ENCODE measurements at regions of chr11 and their contacts with region 1.

Region 1: GRCh38 chr11:30586251-30587144 is at the start of gene MPPED2:
- DNase-seq: peak; percentile 57 to 61
- ATAC-seq: peak; percentile 71 to 93 (median 84)
- H3K4me3 ChIP-seq: peak within 1 kb of the TSS; percentile 72 to 96 (median 90)
- H3K27ac ChIP-seq: peak within 1 kb of the TSS; percentile 47 to 95 (median 92)
- H3K4me1 ChIP-seq: peaks cover 0 to 20% (median 9%) of the 10 kb centered on the region in 9 donors
- H3K27me3 ChIP-seq: peaks cover 0 to 51% (median 0%) of the 10 kb centered on the region in 7 donors
- CTCF ChIP-seq: peak; percentile 16 to 64 (median 53)
- total RNA-seq, gene MPPED2: 6.5 to 15.1 (median 10.6) TPM

Region 2: GRCh38 chr11:30358536-30358935 is 228.0 kb before region 1 on chr11:
- intact Hi-C with region 1: loop called in 3 of 10 experiments (anchors 5 to 10 kb)
- DNase-seq: peak in 1 of 2 donors; percentile 39
- ATAC-seq: peak in 5 of 8 donors; percentile 33 to 75 (median 62)
- H3K4me3 ChIP-seq: no peak overlapping the region
- H3K27ac ChIP-seq: peak overlapping the region in 2 of 10 donors; percentile 33 to 46
- H3K4me1 ChIP-seq: peaks cover 0 to 16% (median 0%) of the 10 kb centered on the region in 9 donors
- H3K27me3 ChIP-seq: no peaks in the 10 kb centered on the region
- CTCF ChIP-seq: no peak

Region 3: DNA sequence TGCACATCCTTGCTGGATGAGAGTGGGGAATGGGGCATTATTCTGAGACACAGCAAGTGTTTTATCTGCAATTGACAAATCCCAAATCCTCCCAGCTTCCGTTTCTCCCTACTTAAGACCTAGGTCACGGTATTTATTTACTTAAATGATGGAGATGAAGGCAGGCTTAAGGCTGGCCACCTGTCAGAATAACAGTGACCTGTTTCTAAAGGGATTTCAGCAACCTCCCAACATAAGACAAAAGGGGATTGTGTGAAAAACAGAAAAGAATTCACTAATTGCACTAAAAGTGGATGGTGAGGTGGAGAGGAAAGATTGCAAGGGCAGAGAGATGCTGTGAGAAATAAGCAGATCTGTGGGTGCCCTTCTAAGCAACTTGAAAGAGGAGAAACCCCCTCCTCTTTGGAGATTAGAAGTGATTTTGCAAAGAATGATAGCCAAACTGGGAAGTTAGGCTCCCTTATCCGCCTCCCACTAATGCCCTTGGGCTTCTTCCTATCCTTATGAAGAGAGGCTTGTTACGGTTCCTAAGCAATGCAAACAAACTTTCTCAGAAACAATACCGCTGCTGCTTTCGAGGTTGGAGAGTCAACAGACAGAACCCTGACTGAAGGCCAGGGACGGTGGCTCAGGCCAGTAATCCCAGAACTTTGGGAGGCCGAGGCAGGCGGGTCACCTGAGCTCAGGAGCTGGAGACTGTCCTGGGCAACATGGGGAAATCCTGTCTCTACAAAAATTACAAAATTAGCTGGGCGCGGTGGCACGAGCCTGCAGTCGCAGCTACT is 179.3 kb before region 1 on chr11:
- intact Hi-C with region 1: loop called in 1 of 10 experiments (anchors 10 kb)
- DNase-seq: peak in 1 of 2 donors; percentile 22
- ATAC-seq: peak; percentile 52 to 97 (median 81)
- H3K4me3 ChIP-seq: no peak overlapping the region
- H3K27ac ChIP-seq: peak overlapping the region in 1 of 10 donors; percentile 18
- H3K4me1 ChIP-seq: no peaks in the 10 kb centered on the region
- H3K27me3 ChIP-seq: no peaks in the 10 kb centered on the region
- CTCF ChIP-seq: no peak

Region 4: GRCh38 chr11:30459821-30460220 is 126.7 kb before region 1 on chr11:
- intact Hi-C with region 1: loop called in 2 of 10 experiments (anchors 10 kb)
- DNase-seq: no peak
- ATAC-seq: peak in 1 of 8 donors; percentile 71
- H3K4me3 ChIP-seq: no peak overlapping the region
- H3K27ac ChIP-seq: no peak overlapping the region
- H3K4me1 ChIP-seq: peaks cover 11 to 69% (median 34%) of the 10 kb centered on the region in 9 donors
- H3K27me3 ChIP-seq: no peaks in the 10 kb centered on the region
- CTCF ChIP-seq: no peak

Region 5: DNA sequence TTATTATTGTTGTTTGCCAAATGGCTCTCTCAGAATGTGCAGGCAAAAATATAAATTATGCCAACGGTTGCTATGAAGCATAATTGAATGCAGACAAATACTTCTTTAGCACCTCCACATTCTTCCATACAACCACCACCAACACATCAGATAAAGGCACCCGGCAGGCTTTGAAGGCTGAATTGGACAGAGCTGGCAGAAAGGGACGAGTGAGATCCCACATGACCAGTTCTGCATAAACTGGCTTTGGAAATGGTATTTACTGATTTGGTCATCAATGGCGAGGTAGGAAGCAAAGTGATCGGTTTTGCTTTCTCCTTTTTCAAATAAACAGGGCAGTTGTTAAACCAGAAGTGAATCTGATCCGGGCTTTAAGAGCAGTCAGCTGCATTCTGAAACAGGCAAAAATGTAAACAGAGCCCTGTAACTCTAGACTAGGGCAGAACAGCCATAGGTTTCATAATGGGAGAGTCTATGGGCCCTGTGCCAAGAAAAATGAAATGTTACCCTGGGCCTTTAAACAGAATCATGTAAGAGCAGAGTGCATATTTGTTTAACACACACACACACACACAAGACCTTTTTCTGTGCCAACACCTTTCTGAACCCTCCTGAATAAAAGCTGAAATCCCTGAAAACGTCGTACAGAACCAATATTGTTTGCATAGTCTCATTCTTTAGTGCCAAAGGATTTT is 98.0 kb before region 1 on chr11:
- intact Hi-C with region 1: loop called in 6 of 10 experiments (anchors 5 to 10 kb)
- DNase-seq: no peak
- ATAC-seq: peak in 5 of 8 donors; percentile 41 to 55 (median 52)
- H3K4me3 ChIP-seq: no peak overlapping the region
- H3K27ac ChIP-seq: peak overlapping the region in 4 of 10 donors; percentile 14 to 48 (median 43)
- H3K4me1 ChIP-seq: peaks cover 3 to 54% (median 38%) of the 10 kb centered on the region in 9 donors
- H3K27me3 ChIP-seq: no peaks in the 10 kb centered on the region
- CTCF ChIP-seq: no peak

Region 6: DNA sequence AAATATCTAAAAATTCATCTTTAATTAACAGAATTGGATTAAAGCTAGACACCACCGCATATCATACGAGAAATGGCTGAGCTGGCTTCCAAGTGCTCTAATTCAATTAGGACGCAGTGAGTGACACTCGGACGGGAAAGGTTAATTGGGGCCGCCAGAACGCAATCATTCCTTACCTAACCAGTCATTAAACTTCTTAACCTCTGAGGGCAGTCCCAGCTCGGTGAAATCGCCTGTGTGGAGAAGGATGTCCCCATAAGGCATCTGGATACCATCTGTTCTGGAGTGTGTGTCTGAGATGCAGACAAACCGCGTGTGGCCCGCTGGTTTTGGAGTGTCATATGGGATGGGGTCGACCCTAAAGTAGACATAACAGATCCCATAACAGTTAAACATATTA is 50.7 kb before region 1 on chr11:
- intact Hi-C with region 1: no loop called
- DNase-seq: no peak
- ATAC-seq: no peak
- H3K4me3 ChIP-seq: no peak overlapping the region
- H3K27ac ChIP-seq: no peak overlapping the region
- H3K4me1 ChIP-seq: peaks cover 0 to 27% (median 8%) of the 10 kb centered on the region in 9 donors
- H3K27me3 ChIP-seq: no peaks in the 10 kb centered on the region
- CTCF ChIP-seq: no peak

Region 7: DNA sequence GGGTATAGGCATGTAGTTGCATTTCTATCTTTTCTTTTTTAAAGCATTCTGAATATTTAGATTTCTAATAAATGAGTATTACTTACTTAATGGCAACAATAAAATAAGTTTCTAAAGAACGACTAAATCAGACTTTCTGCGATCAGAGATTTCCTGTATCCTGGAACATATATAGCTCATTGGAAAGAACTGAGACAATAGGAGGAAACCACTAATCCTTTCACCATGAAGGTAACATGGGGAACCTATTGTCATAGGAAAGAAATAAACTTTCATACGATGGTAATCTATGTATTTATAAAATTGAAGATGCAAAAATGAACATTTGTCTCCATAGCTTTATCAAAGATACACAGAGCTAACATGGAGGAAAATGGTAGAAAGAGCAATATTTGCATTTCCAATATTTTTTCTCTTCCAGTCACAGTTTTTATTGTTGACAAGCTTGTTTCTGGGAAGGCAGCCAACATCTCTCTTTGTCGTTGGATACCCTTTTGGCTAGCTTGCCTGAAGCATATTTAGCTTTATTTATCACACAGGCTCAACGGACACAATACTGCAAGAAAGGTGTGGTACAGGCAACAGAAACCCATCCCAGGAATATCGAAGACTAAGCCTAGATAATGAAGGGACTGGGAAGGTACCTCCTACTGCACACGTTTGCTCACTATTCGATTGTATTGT is 293.0 kb after region 1 on chr11:
- intact Hi-C with region 1: loop called in 1 of 10 experiments (anchors 10 kb)
- DNase-seq: peak in 1 of 2 donors; percentile 81
- ATAC-seq: peak; percentile 80 to 94 (median 90)
- H3K4me3 ChIP-seq: peak overlapping the region in 1 of 10 donors; percentile 30
- H3K27ac ChIP-seq: peak overlapping the region in 9 of 10 donors; percentile 6 to 72 (median 57)
- H3K4me1 ChIP-seq: peaks cover 4 to 64% (median 36%) of the 10 kb centered on the region in 9 donors
- H3K27me3 ChIP-seq: no peaks in the 10 kb centered on the region
- CTCF ChIP-seq: no peak